GM23248 (cell line): ENCODE measurements at regions of chr1 and their contacts with region 1.

Region 1: GRCh38 chr1:186212544-186213226 is 162.4 kb downstream of the TPR start:
- DNase-seq: peak; percentile 90
- H3K4me3 ChIP-seq: no peak overlapping the region
- H3K27ac ChIP-seq: no peak overlapping the region
- H3K4me1 ChIP-seq: peaks cover 23% of the 10 kb centered on the region
- H3K27me3 ChIP-seq: no peaks in the 10 kb centered on the region

Region 2: GRCh38 chr1:185720633-185721272 is 491.9 kb before region 1 on chr1:
- in situ Hi-C with region 1: loop called (anchors 10 kb)
- DNase-seq: peak; percentile 63
- H3K4me3 ChIP-seq: no peak overlapping the region
- H3K27ac ChIP-seq: no peak overlapping the region
- H3K4me1 ChIP-seq: peaks cover 29% of the 10 kb centered on the region
- H3K27me3 ChIP-seq: no peaks in the 10 kb centered on the region

Region 3: GRCh38 chr1:185813401-185813979 is 399.2 kb before region 1 on chr1:
- in situ Hi-C with region 1: loop called (anchors 25 kb)
- DNase-seq: peak; percentile 75
- H3K4me3 ChIP-seq: no peak overlapping the region
- H3K27ac ChIP-seq: no peak overlapping the region
- H3K4me1 ChIP-seq: peaks cover 15% of the 10 kb centered on the region
- H3K27me3 ChIP-seq: no peaks in the 10 kb centered on the region